Kidney (tissue), 22 donors: ENCODE measurements at regions of chr11 and their contacts with region 1.

Region 1: DNA sequence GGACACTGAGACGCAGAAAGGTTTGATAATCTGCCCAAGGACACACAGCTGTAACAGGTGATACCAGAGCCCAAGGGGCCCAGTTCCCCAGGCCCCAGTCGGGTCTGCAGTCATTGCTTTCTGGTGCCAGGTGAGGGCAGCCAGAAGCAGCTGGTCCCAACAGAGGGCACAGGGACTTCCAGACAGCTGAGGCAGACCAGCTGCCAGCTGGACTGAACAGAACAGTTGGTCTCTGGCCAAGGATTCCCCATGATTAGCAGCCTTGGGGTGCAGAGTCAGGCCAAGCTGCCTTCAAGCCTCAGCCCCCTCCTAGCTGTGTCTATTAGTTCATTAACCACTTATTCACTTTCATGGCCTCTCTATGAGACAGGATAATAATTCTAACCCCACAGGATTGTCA is 105.6 kb downstream of the RRAS2 start:
- DNase-seq: peak in 1 of 5 donors; percentile 53
- H3K4me3 ChIP-seq: no peak overlapping the region
- H3K27ac ChIP-seq: no peak overlapping the region
- H3K4me1 ChIP-seq: peaks cover 0 to 6% (median 0%) of the 10 kb centered on the region in 3 donors
- H3K27me3 ChIP-seq: no peaks in the 10 kb centered on the region
- CTCF ChIP-seq: no peak

Region 2: DNA sequence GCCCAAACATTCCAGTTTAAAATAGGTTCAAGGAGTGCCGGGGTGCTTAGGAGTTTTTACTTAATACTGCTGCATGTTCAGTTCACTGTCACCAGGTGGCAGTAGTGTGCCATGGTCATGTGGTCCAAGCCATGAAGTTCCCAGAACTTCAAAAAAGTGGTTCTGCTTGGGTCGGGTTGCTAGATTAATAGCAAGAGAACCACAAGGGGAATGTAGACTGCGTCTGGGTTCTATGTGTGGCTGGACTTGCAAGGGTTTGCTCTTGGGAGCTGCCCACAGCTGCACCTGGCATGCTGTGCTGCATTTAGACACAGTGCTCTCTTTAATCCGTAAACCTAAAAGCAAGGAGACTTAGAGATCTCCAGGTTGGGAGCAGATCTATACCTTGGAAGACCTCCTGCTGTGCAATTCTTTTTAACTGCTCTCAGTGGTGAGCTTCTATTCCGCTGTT is 297.4 kb before region 1 on chr11:
- intact Hi-C with region 1: loop called (anchors 5 kb)
- DNase-seq: peak in 4 of 5 donors; percentile 58 to 86 (median 66)
- H3K4me3 ChIP-seq: no peak overlapping the region
- H3K27ac ChIP-seq: no peak overlapping the region
- H3K4me1 ChIP-seq: no peaks in the 10 kb centered on the region
- H3K27me3 ChIP-seq: no peaks in the 10 kb centered on the region
- CTCF ChIP-seq: peak; percentile 86

Region 3: DNA sequence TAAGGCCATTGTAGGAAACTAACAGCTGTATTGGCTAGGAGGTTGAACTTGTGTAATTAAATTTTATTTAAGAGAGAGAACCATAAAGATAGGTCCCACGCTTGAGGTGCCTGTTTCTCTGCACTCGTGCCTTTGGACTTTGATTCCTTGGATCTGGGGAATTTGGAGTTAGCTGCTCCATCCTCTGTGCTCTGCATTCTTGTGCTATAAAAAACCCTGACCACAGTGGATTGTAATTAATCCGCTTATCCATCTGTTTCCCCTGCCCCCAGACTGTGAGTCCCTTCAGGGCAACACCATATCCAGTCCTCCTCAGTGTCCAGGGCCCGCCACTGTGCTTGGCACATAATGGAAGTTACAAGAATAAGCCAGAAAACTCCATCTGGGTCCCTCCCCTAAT is 121.1 kb before region 1 on chr11:
- intact Hi-C with region 1: no loop called
- DNase-seq: peak in 2 of 5 donors; percentile 20 to 31
- H3K4me3 ChIP-seq: no peak overlapping the region
- H3K27ac ChIP-seq: no peak overlapping the region
- H3K4me1 ChIP-seq: peaks cover 0 to 3% (median 0%) of the 10 kb centered on the region in 3 donors
- H3K27me3 ChIP-seq: no peaks in the 10 kb centered on the region
- CTCF ChIP-seq: no peak

Region 4: GRCh38 chr11:14202251-14203196 is 50.9 kb before region 1 on chr11:
- intact Hi-C with region 1: no loop called
- DNase-seq: no peak
- H3K4me3 ChIP-seq: no peak overlapping the region
- H3K27ac ChIP-seq: no peak overlapping the region
- H3K4me1 ChIP-seq: no peaks in the 10 kb centered on the region
- H3K27me3 ChIP-seq: no peaks in the 10 kb centered on the region
- CTCF ChIP-seq: no peak